ENCODE measurements at regions of chr7 and their contacts with region 1.

Region 1: GRCh38 chr7:130896898-130897514 is 163.0 kb upstream of the KLF14 start:
- DNase-seq: peak; percentile 67 to 91
- ATAC-seq: peak; percentile 26 to 57
- H3K4me3 ChIP-seq: no peak overlapping the region
- H3K27ac ChIP-seq: peak overlapping the region; percentile 92 to 93
- H3K4me1 ChIP-seq: peaks cover 97% of the 10 kb centered on the region
- CTCF ChIP-seq: peak; percentile 85
- EP300 ChIP-seq: no peak
- POLR2A ChIP-seq: no peak
- RAD21 ChIP-seq: peak; percentile 90

Region 2: GRCh38 chr7:130875265-130875741 is 21.7 kb before region 1 on chr7:
- CTCF ChIA-PET with region 1: interaction called, 185 read pairs
- POLR2A ChIA-PET with region 1: interaction called, 4 read pairs
- DNase-seq: peak; percentile 75 to 78
- ATAC-seq: peak; percentile 63 to 71
- H3K4me3 ChIP-seq: no peak overlapping the region
- H3K27ac ChIP-seq: peak overlapping the region; percentile 56 to 70; a peak in 5 of 6 replicates
- H3K4me1 ChIP-seq: peaks cover 95% of the 10 kb centered on the region
- CTCF ChIP-seq: peak; percentile 74
- EP300 ChIP-seq: no peak
- POLR2A ChIP-seq: no peak
- RAD21 ChIP-seq: peak; percentile 86 to 87

Region 3: DNA sequence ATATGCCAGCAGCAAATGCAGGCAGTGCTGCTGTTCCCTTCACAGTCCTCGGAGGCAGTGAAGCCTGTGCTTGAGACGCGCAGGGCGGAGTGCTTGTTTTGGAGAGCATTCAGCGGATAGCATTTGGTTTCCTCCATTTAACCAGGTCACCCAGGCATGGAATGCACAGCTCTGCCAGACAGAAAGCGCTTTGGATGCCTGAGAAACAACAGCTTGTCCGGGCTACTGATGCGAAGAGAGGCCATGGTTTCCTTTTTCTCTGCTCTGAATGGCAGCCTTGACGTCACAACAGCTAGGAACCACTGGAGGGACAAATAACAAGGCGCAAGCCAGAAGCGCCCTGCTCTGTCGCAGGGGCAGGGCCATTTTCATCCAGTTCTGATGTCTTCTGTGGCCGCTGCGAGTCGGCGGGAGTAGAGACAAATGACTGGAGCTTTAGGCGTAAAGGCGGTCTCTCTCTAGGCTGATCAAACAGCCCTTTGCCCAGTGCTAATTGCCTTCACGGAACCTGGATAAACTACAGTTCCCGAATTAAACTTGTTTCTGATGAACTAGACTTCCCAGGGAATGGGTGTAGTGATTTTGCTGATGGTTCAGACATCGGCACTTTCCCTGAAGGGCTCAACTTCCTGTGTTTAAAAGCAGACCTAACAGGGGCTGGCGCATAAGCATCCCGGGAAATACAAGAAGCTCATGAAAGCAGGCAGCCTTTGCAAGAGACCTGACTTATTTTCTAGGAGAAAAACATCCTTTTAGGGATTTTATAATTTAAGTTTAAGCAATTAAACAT is 24.6 kb after region 1 on chr7:
- CTCF ChIA-PET with region 1: interaction called, 45 read pairs
- POLR2A ChIA-PET with region 1: interaction called, 3 read pairs
- DNase-seq: no peak
- ATAC-seq: peak; percentile 20 to 27; a peak in 4 of 6 replicates
- H3K4me3 ChIP-seq: peak overlapping the region; percentile 3; the same call in 1 of the 3 replicates
- H3K27ac ChIP-seq: peak overlapping the region; percentile 85 to 89
- H3K4me1 ChIP-seq: peaks cover 100% of the 10 kb centered on the region
- CTCF ChIP-seq: no peak
- EP300 ChIP-seq: no peak
- POLR2A ChIP-seq: no peak
- RAD21 ChIP-seq: no peak

Region 4: DNA sequence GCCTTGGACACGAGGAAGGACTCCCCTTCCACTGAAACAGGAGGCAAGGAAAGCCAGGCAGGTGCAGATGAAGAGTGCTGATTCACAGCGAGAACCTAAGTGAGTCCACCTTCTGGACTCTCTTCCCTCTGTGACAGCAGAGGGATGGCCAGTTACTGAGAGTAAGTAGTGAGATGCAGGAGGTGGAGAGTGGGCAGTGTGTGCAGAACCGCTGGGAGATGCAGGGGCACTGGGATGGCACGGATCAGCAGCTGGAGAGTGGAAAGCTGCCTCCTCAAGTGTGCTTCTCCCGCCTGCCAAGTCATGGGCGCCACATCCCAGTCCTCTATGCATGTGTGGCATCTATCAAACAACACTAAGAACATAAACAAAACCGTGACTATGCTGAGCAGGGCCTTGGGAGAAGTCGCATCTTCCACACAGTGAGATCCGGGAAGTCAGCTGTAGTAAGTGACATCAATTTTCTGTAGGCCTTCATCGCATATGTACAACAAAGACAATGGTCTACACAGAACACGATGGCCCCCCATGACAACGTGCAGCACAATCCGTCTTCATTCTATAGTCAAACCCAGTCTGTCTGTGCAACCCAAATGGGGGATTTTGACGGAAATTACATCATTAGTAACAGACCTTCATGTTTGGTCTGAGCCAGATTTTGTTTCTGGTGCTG is 54.4 kb after region 1 on chr7:
- CTCF ChIA-PET with region 1: interaction called, 110 read pairs
- POLR2A ChIA-PET with region 1: no interaction called
- DNase-seq: no peak
- ATAC-seq: peak; percentile 40 to 58
- H3K4me3 ChIP-seq: no peak overlapping the region
- H3K27ac ChIP-seq: peak overlapping the region in 1 of 2 experiments; percentile 47; a peak in 3 of 6 replicates
- H3K4me1 ChIP-seq: peaks cover 61% of the 10 kb centered on the region
- CTCF ChIP-seq: no peak
- EP300 ChIP-seq: no peak
- POLR2A ChIP-seq: no peak
- RAD21 ChIP-seq: no peak

Region 5: GRCh38 chr7:130982160-130982638 is 85.2 kb after region 1 on chr7:
- CTCF ChIA-PET with region 1: interaction called, 31 read pairs
- POLR2A ChIA-PET with region 1: no interaction called
- DNase-seq: peak; percentile 43 to 63
- ATAC-seq: peak; percentile 83 to 85
- H3K4me3 ChIP-seq: no peak overlapping the region
- H3K27ac ChIP-seq: peak overlapping the region in 1 of 2 experiments; percentile 45; a peak in 4 of 6 replicates
- H3K4me1 ChIP-seq: peaks cover 41% of the 10 kb centered on the region
- CTCF ChIP-seq: peak; percentile 77
- EP300 ChIP-seq: no peak
- POLR2A ChIP-seq: no peak
- RAD21 ChIP-seq: peak; percentile 63 to 76

Region 6: GRCh38 chr7:131007394-131008330 is 110.7 kb after region 1 on chr7:
- CTCF ChIA-PET with region 1: interaction called, 73 read pairs
- POLR2A ChIA-PET with region 1: interaction called, 4 read pairs
- DNase-seq: peak; percentile 79 to 93
- ATAC-seq: peak; percentile 86
- H3K4me3 ChIP-seq: no peak overlapping the region
- H3K27ac ChIP-seq: peak overlapping the region; percentile 87 to 91
- H3K4me1 ChIP-seq: peaks cover 65% of the 10 kb centered on the region
- CTCF ChIP-seq: peak; percentile 68
- EP300 ChIP-seq: no peak
- POLR2A ChIP-seq: no peak
- RAD21 ChIP-seq: peak; percentile 76 to 82

Region 7: DNA sequence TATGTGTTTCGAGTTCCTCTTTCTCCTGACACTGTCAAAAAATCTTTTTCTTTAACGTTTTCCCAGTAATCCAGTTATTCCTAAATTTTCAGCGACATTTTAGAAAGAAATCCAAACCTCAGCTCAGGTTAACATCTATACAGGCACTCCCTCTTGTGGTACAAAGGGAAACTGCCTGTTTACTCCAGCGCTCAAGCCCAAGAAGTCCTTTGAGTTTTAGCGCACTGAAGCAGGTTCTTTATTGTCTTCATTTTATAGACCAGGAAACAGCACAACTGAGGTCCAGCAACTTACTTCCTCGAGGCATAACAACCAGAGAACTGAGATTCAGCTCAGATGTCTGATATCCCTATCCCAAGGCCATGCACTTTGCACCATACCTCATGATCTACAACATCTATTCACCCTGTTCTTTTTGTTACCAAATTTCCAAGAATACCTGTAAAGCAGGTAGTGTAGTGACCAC is 143.5 kb after region 1 on chr7:
- CTCF ChIA-PET with region 1: interaction called, 71 read pairs
- POLR2A ChIA-PET with region 1: interaction called, 6 read pairs
- DNase-seq: peak; percentile 58 to 79
- ATAC-seq: peak; percentile 82 to 83
- H3K4me3 ChIP-seq: no peak overlapping the region
- H3K27ac ChIP-seq: peak overlapping the region; percentile 15 to 47; a peak in 1 of 6 replicates
- H3K4me1 ChIP-seq: peaks cover 38% of the 10 kb centered on the region
- CTCF ChIP-seq: peak; percentile 92
- EP300 ChIP-seq: no peak
- POLR2A ChIP-seq: no peak
- RAD21 ChIP-seq: peak; percentile 89 to 91